ENCODE measurements at regions of chr3 and their contacts with region 1.

Region 1: GRCh38 chr3:111668912-111669488 is 73.9 kb upstream of the ZBED2 start:
- DNase-seq: no peak
- H3K4me3 Mint-ChIP-seq: no peak overlapping the region
- H3K27ac Mint-ChIP-seq: peak overlapping the region; percentile 37
- H3K4me1 Mint-ChIP-seq: peaks cover 64% of the 10 kb centered on the region
- H3K27me3 Mint-ChIP-seq: no peaks in the 10 kb centered on the region

Region 2: DNA sequence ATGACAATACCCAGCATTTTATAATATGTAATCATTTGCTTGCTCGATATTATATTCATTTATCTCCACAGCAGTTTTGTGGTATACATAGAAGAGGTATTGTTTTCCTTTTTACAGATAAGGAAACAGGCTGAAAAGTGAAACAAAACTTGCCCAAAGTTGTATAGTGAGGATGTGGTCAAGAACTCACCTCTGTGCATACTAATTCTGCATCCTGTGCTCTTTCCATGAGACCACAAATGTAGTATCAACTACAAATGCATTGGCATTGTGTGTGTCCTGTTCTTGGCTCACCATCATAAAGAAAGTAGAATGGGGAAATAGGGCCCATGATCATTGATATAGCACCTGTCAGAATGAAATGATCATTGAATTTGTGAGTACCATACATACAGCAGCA is 430.1 kb before region 1 on chr3:
- intact Hi-C with region 1: loop called (anchors 2 kb)
- DNase-seq: peak; percentile 40
- H3K4me3 Mint-ChIP-seq: no peak overlapping the region
- H3K27ac Mint-ChIP-seq: no peak overlapping the region
- H3K4me1 Mint-ChIP-seq: peaks cover 26% of the 10 kb centered on the region
- H3K27me3 Mint-ChIP-seq: peaks cover 6% of the 10 kb centered on the region

Region 3: DNA sequence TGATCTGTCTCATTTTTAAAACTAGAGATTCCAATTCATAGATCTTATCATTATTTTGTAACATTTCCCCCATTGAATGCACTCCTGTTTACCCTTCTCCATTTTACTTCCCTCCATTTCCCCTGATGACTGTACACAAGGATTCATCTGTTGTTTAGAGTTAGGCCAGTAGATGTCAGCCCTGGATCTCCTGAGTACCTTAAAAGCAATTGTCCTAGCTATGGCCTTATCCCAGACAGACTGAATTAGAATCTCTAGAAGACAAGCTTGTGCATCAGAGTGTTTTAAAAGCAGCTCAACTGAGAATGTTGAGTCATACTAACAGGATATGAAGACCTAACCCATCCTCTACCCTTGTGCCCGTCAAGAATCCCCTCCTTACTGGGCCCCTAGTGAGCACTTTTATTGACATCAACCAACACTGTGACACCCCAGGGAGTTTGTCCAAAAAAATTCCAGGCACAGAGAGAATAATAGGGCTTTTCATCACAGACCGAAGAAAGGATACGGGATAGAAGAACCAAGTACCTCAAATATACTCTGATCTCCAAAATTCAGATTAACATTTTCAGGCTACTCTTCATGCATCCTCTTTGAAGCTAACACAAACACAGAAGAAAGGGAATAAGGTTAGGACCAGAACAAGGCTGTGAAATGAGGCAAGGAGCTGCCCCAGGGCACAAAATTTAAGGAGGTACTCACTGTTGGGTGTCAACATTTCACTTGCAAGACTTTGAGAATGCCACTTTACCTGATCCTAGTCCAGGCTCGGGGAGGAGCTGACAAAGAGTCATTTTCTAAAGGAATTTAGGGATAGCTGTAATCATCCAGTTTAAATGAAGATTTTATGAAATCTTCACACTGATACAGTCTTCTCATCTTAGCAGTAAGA is 91.0 kb before region 1 on chr3:
- intact Hi-C with region 1: loop called (anchors 1 kb)
- DNase-seq: no peak
- H3K4me3 Mint-ChIP-seq: no peak overlapping the region
- H3K27ac Mint-ChIP-seq: peak overlapping the region; percentile 46
- H3K4me1 Mint-ChIP-seq: peaks cover 65% of the 10 kb centered on the region
- H3K27me3 Mint-ChIP-seq: no peaks in the 10 kb centered on the region

Region 4: DNA sequence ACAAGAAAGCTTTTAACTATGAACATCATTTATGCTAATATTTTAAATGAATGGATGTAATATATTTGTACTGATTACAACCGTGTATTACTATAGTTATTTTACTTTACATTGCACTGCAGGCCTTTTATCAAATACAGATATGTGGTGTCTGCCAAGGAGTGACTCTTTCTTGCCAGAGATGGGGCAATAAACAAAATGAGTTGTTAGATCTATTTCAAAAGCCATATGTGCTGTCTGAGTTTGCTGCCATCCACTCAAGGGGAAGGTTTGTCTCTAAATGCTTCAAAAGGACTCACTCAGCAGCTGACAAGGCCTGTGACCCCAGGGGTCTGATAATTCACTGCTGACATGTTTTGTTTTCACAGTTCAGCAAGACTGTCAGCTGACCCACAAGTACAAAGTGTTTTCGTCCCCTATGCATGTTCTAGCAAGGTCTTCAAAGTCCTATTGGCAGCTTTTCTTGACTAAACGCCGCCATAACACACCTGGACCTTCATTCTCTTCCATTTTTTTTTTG is 32.6 kb before region 1 on chr3:
- intact Hi-C with region 1: no loop called
- DNase-seq: no peak
- H3K4me3 Mint-ChIP-seq: no peak overlapping the region
- H3K27ac Mint-ChIP-seq: no peak overlapping the region
- H3K4me1 Mint-ChIP-seq: peaks cover 2% of the 10 kb centered on the region
- H3K27me3 Mint-ChIP-seq: no peaks in the 10 kb centered on the region

Region 5: DNA sequence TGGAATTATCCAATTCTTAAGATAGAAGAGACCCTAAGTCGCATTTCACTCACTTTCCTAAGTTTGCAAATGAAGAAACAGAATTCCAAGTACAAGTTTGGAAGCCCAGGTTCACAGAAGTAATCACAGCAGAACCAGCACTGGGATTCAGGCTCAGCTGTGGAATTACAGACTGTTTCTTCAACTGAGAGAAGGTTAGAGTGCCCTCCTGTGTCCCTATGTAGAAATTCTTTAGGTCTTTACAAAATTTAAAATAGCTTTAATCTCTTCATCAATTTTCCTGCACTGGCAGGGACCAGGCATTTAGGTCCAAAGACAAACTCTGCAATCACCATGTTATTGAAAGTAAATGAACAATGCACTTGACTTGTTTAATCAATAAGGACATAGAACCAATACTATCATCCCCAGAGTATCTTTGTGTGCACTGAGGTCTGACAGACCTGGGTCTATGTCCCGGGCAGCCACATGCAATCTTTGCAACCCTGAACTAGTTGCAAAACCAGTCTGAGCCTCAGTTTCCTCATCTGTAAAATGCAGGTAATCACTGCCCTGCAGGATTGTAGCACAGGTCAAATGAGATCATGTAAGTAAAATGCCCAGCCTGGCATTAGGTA is 22.4 kb after region 1 on chr3:
- intact Hi-C with region 1: loop called (anchors 1 kb)
- DNase-seq: no peak
- H3K4me3 Mint-ChIP-seq: no peak overlapping the region
- H3K27ac Mint-ChIP-seq: no peak overlapping the region
- H3K4me1 Mint-ChIP-seq: peaks cover 56% of the 10 kb centered on the region
- H3K27me3 Mint-ChIP-seq: no peaks in the 10 kb centered on the region

Region 6: DNA sequence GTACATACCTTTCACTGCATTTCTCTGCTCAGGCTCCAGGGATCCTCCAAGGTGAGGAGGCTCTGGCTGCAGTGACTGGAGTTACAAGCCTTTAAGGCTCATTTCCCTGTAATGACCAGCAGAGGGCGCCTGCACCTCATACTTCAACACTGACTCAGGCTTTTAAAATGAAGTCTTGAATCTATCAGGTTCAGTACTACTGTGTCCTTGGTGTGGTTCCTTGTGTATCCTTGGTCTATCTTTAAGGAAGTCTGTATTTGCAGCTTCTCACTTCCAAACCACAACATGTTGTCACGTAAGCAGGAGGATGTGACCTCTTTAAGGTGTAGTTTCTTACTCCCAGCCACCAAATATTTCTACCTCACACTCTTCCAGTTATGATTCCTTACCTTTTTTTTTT is 48.6 kb after region 1 on chr3:
- intact Hi-C with region 1: loop called (anchors 1 kb)
- DNase-seq: peak; percentile 45
- H3K4me3 Mint-ChIP-seq: no peak overlapping the region
- H3K27ac Mint-ChIP-seq: no peak overlapping the region
- H3K4me1 Mint-ChIP-seq: peaks cover 1% of the 10 kb centered on the region
- H3K27me3 Mint-ChIP-seq: no peaks in the 10 kb centered on the region

Region 7: DNA sequence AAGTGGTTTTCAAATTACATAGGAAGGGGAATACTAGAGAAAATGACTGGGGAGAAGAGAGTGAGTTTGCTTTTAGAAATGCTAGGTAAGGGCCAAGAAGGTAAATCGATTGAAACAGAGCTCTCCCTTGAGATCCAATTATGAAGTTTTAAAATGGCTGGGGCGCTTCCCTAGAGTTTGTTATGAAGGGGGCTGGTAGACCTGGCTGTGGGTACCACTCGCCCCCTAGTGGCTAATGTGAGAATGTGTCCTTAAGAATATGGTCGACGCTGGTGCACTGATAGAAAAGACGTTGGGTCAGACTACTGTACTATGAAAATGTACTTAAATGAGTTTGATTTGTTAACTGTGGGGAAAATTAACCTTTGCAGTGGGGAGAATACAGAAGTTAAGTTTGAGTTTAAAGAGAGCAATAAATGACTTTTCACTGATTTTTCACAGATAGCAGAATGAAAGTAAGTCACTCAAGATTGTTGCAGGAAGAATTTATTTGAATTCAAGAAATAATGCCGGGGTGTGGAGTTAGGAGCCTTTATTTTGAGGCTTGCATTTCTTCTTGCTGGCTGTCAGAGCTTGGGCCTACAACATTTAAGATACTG is 374.7 kb after region 1 on chr3:
- intact Hi-C with region 1: loop called (anchors 2 kb)
- DNase-seq: peak; percentile 37
- H3K4me3 Mint-ChIP-seq: no peak overlapping the region
- H3K27ac Mint-ChIP-seq: no peak overlapping the region
- H3K4me1 Mint-ChIP-seq: peaks cover 5% of the 10 kb centered on the region
- H3K27me3 Mint-ChIP-seq: peaks cover 2% of the 10 kb centered on the region